ENCODE measurements at regions of chr16 and their contacts with region 1.

Region 1: GRCh38 chr16:74448992-74449434 is 27.7 kb upstream of the CLEC18B start:
- DNase-seq: peak; percentile 66 to 79 (median 71)
- H3K4me3 ChIP-seq: no peak overlapping the region
- H3K27ac ChIP-seq: peak overlapping the region; percentile 3 to 39
- H3K4me1 ChIP-seq: peaks cover 6% of the 10 kb centered on the region
- H3K27me3 ChIP-seq: no peaks in the 10 kb centered on the region
- CTCF ChIP-seq: no peak
- EP300 ChIP-seq: no peak
- POLR2A ChIP-seq: no peak

Region 2: DNA sequence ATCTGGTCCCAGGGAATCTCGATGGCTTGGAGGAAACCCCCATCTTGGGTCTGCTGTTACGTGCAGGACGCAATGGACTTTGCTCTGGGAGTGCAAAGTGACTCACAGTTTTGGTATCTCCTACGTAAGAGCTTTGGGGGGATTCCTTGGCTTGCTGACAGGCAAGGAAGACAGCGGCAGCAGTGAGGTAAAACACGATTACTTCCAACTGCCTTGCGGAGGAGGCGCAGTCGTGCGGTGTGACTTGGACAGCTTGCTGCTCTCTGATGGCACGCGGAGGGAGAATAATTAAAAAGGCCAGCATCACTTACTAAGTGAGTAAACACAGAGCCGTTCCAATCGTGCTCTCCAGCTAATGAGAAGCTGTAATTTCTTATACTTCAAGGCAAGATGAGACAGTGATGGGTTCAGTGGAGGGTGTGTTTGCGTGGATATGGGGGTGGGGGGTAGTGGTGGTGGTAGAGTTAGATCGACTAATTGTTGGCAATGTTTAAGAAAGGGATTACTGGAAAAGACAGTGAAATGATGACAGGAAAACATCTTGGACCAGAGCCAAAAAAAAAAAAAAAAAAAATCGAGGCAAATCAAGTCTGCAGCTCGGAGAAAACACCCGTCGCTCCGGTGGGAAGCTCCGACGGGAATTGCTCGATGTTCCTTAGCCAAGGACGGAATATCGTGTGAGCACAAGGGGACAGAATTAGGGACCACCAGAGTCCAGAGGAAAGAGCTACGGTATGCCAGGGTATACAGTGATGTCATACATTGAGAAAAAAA is 1216.3 kb before region 1 on chr16:
- intact Hi-C with region 1: no loop called
- DNase-seq: peak; percentile 60 to 77 (median 73)
- H3K4me3 ChIP-seq: peak overlapping the region; percentile 32
- H3K27ac ChIP-seq: no peak overlapping the region
- H3K4me1 ChIP-seq: peaks cover 2% of the 10 kb centered on the region
- H3K27me3 ChIP-seq: no peaks in the 10 kb centered on the region
- CTCF ChIP-seq: no peak
- EP300 ChIP-seq: no peak
- POLR2A ChIP-seq: no peak

Region 3: GRCh38 chr16:74315059-74315458 is 134.0 kb before region 1 on chr16:
- intact Hi-C with region 1: no loop called
- DNase-seq: no peak
- H3K4me3 ChIP-seq: no peak overlapping the region
- H3K27ac ChIP-seq: no peak overlapping the region
- H3K4me1 ChIP-seq: no peaks in the 10 kb centered on the region
- H3K27me3 ChIP-seq: no peaks in the 10 kb centered on the region
- CTCF ChIP-seq: no peak
- EP300 ChIP-seq: no peak
- POLR2A ChIP-seq: no peak

Region 4: GRCh38 chr16:74372953-74373846 is 75.8 kb before region 1 on chr16:
- intact Hi-C with region 1: loop called in 1 of 4 experiments (anchors 10 kb)
- DNase-seq: no peak
- H3K4me3 ChIP-seq: no peak overlapping the region
- H3K27ac ChIP-seq: no peak overlapping the region
- H3K4me1 ChIP-seq: no peaks in the 10 kb centered on the region
- H3K27me3 ChIP-seq: no peaks in the 10 kb centered on the region
- CTCF ChIP-seq: no peak
- EP300 ChIP-seq: no peak
- POLR2A ChIP-seq: no peak

Region 5: DNA sequence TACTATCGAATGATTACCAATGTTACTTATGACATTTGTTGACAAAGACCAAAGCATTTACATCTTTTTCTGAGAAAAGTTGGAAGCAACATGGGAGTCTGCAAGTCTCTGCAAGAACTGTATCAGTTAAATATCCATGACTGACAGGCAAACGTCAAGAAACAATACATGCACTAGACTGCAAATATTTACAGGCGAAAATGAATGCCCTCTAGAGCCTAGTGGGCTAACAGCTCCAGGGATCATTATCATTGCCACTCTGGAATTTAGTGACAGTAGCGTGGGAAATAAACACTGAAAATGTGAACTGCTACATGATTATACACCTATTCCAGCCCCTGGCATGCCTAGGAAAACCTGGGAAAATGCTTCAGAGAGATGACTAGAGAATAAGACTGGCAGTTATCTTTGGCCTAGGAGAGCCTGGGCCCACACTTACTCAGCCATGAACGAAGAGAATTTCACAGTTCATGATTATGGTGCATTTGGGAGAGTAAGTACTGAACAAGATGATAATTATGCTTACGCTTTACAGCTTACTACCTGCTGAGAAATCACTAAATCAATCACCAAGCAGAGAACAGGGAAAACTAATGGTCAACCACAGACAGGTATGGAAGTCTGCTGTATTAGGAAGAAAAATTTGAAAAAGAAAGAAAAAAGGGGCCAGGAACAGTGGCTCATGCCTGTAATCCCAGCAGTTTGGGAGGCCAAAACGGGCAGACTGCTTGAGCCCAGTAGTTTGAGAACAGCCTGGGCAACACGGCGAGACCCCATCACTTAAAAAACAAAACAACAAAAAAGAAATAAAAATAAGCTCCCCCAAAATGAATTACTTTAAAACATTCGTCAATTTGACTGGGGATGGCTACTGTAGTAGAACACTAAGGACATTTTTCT is 38.8 kb after region 1 on chr16:
- intact Hi-C with region 1: no loop called
- DNase-seq: no peak
- H3K4me3 ChIP-seq: no peak overlapping the region
- H3K27ac ChIP-seq: no peak overlapping the region
- H3K4me1 ChIP-seq: no peaks in the 10 kb centered on the region
- H3K27me3 ChIP-seq: no peaks in the 10 kb centered on the region
- CTCF ChIP-seq: no peak
- EP300 ChIP-seq: no peak
- POLR2A ChIP-seq: no peak

Region 6: GRCh38 chr16:74771656-74772315 is 322.8 kb after region 1 on chr16:
- intact Hi-C with region 1: no loop called
- DNase-seq: no peak
- H3K4me3 ChIP-seq: no peak overlapping the region
- H3K27ac ChIP-seq: no peak overlapping the region
- H3K4me1 ChIP-seq: peaks cover 7% of the 10 kb centered on the region
- H3K27me3 ChIP-seq: no peaks in the 10 kb centered on the region
- CTCF ChIP-seq: no peak
- EP300 ChIP-seq: no peak
- POLR2A ChIP-seq: no peak